CD8-positive, alpha-beta memory T cell (primary cell): ENCODE measurements at regions of chr6 and their contacts with region 1.

Region 1: GRCh38 chr6:73515204-73515655 is 5.6 kb downstream of the EEF1A1 start:
- DNase-seq: no peak
- H3K4me3 ChIP-seq: no peak overlapping the region
- H3K4me3 Mint-ChIP-seq: peak overlapping the region in 5 of 7 donors; percentile 43 to 88 (median 54)
- H3K27ac ChIP-seq: no peak overlapping the region
- H3K27ac Mint-ChIP-seq: peak overlapping the region; percentile 78 to 99 (median 85)
- H3K4me1 ChIP-seq: peaks cover 33% of the 10 kb centered on the region
- H3K4me1 Mint-ChIP-seq: peaks cover 53 to 62% (median 59%) of the 10 kb centered on the region in 3 donors
- H3K27me3 ChIP-seq: no peaks in the 10 kb centered on the region
- H3K27me3 Mint-ChIP-seq: peaks cover 0 to 2% of the 10 kb centered on the region in 2 donors

Region 2: GRCh38 chr6:73471686-73472290 is 43.4 kb before region 1 on chr6:
- CTCF ChIA-PET with region 1: interaction called, 10 read pairs
- POLR2A ChIA-PET with region 1: no interaction called
- DNase-seq: no peak
- H3K4me3 ChIP-seq: no peak overlapping the region
- H3K4me3 Mint-ChIP-seq: peak overlapping the region in 4 of 7 donors; percentile 16 to 74 (median 54)
- H3K27ac ChIP-seq: no peak overlapping the region
- H3K27ac Mint-ChIP-seq: peak overlapping the region; percentile 6 to 90 (median 68)
- H3K4me1 ChIP-seq: no peaks in the 10 kb centered on the region
- H3K4me1 Mint-ChIP-seq: peaks cover 11 to 23% (median 18%) of the 10 kb centered on the region in 3 donors
- H3K27me3 ChIP-seq: no peaks in the 10 kb centered on the region
- H3K27me3 Mint-ChIP-seq: no peaks in the 10 kb centered on the region

Region 3: DNA sequence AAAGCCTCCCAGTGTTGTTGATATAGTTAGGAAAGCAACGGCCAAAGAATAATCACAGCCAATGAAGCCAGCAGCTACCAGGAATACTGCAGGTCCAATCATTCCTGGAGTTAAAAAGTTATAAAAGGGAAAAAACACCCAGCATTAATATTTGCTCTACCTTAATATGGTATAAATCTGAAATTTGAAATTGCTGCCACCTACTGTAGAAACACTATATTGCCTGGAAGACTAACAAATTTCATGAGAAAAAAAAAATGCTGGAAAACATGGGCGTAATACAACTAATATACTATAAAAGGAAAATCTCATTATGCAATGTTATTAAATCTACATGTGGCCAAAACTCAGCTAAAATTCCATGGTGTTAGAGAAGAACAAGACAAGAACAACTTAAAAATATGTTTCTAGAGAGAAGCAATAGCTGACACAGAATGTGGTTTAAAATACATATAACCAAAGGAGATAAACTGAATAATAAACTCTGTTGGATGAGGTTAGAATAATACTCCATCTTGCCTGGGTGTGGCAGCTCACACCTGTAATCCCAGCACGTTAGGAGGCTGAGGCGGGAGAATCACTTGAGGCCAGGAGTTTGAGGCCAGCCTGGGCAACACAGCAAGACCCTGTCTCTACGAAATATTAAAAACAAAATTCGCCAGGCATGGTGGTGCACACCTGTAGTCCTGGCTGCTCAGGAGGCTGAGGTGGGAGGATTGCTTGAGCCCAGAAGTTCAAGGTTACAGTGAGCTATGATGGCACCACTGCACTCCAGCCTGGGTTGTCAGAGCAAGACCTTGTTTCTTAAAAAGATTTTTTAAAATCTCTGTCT is 95.4 kb after region 1 on chr6:
- CTCF ChIA-PET with region 1: interaction called, 141 read pairs
- POLR2A ChIA-PET with region 1: interaction called, 10 read pairs
- DNase-seq: peak in 2 of 5 donors; percentile 38 to 56
- H3K4me3 ChIP-seq: no peak overlapping the region
- H3K4me3 Mint-ChIP-seq: no peak overlapping the region
- H3K27ac ChIP-seq: no peak overlapping the region
- H3K27ac Mint-ChIP-seq: peak overlapping the region in 4 of 8 donors; percentile 2 to 69 (median 8)
- H3K4me1 ChIP-seq: peaks cover 3% of the 10 kb centered on the region
- H3K4me1 Mint-ChIP-seq: peaks cover 4 to 6% (median 6%) of the 10 kb centered on the region in 3 donors
- H3K27me3 ChIP-seq: no peaks in the 10 kb centered on the region
- H3K27me3 Mint-ChIP-seq: no peaks in the 10 kb centered on the region

Region 4: GRCh38 chr6:73653571-73654424 is 138.6 kb after region 1 on chr6 and contains the start of gene SLC17A5:
- CTCF ChIA-PET with region 1: interaction called, 32 read pairs
- POLR2A ChIA-PET with region 1: interaction called, 54 read pairs
- DNase-seq: peak; percentile 82 to 91 (median 87)
- H3K4me3 ChIP-seq: peak within 1 kb of the TSS; percentile 97
- H3K4me3 Mint-ChIP-seq: peak within 1 kb of the TSS; percentile 99 to 100 (median 99)
- H3K27ac ChIP-seq: peak within 1 kb of the TSS; percentile 93
- H3K27ac Mint-ChIP-seq: peak within 1 kb of the TSS; percentile 93 to 99 (median 98)
- H3K4me1 ChIP-seq: peaks cover 22% of the 10 kb centered on the region
- H3K4me1 Mint-ChIP-seq: peaks cover 40 to 47% (median 46%) of the 10 kb centered on the region in 3 donors
- H3K27me3 ChIP-seq: no peaks in the 10 kb centered on the region
- H3K27me3 Mint-ChIP-seq: no peaks in the 10 kb centered on the region
- total RNA-seq, gene SLC17A5: 5.4 to 5.6 TPM